ENCODE measurements at regions of chr3 and their contacts with region 1.

Region 1: DNA sequence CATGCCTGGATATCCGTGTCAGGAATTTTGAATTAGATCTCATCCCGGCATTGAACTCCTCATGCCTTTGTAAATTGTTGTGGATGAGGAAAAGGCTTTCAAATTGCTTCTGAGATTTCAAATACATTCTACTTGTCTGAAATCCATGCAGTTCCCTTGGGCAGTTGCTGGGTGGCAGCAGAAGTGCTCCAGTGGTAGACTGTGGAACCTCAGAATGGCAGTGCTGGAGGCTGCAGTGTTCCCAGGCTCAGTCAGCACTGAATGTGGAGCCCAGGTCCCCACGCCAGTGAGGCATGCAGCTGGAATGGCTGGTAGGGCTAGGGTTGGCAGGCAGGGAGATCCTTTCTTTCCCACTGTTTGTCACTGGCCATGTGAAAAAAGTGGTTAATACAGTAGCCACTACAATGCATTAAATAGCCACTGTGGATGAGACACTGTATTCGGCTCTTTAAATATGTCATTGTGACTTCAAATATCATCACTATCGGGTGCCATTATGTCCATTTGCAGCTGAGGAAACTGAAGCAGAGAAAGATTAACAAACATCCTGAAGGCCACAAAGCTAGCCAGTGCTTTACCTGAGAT is 98.6 kb downstream of the TPRG1 start:
- DNase-seq: peak; percentile 61
- H3K4me3 ChIP-seq: no peak overlapping the region
- H3K27ac ChIP-seq: no peak overlapping the region
- H3K4me1 ChIP-seq: no peaks in the 10 kb centered on the region
- CTCF ChIP-seq: peak; percentile 75

Region 2: GRCh38 chr3:189056646-189057335 is 213.5 kb before region 1 on chr3:
- CTCF ChIA-PET with region 1: no interaction called
- POLR2A ChIA-PET with region 1: no interaction called
- intact Hi-C with region 1: no loop called
- DNase-seq: no peak
- H3K4me3 ChIP-seq: no peak overlapping the region
- H3K27ac ChIP-seq: no peak overlapping the region
- H3K4me1 ChIP-seq: no peaks in the 10 kb centered on the region
- CTCF ChIP-seq: no peak

Region 3: GRCh38 chr3:189389346-189389745 is 119.0 kb after region 1 on chr3:
- CTCF ChIA-PET with region 1: no interaction called
- POLR2A ChIA-PET with region 1: no interaction called
- intact Hi-C with region 1: loop called (anchors 5 kb)
- DNase-seq: no peak
- H3K4me3 ChIP-seq: no peak overlapping the region
- H3K27ac ChIP-seq: no peak overlapping the region
- H3K4me1 ChIP-seq: peaks cover 8% of the 10 kb centered on the region
- CTCF ChIP-seq: no peak

Region 4: GRCh38 chr3:189588070-189588820 is 317.9 kb after region 1 on chr3:
- CTCF ChIA-PET with region 1: no interaction called
- POLR2A ChIA-PET with region 1: no interaction called
- intact Hi-C with region 1: loop called (anchors 10 kb)
- DNase-seq: no peak
- H3K4me3 ChIP-seq: no peak overlapping the region
- H3K27ac ChIP-seq: no peak overlapping the region
- H3K4me1 ChIP-seq: no peaks in the 10 kb centered on the region
- CTCF ChIP-seq: no peak

Region 5: DNA sequence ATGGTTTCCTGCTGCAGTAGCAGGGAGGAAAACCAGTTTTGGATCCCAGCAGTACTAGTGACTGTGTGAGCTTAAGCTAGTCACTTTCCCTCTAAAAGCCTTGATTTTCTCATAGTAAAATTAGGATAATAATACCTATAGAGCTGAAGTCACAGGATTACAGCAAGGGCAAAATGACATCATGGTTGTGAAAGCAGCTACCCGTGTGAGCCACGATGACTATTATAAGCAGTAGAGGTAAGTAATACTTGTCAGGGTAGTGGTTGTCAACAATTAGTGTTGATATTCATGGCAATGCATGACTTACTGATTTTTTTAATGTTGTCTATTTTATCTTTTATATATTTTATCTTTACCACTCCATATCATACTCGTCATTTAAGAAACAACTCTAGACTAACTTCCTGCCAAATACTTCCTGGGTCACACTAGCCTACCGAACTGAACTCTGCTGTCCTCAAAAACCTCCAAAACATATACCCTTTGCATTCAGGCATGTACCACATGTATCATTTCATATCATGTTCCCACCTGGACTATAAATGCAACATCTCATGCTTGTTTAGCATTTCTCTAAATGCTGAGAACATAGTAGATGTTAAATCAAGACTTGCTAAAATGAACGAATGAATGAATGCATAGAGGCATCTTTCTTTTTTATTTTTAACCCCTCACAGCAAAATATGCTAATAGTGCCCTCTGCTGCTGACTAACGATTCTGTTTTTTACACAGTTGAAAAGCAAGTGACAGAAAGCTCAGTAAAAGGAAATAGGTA is 677.8 kb after region 1 on chr3:
- CTCF ChIA-PET with region 1: no interaction called
- POLR2A ChIA-PET with region 1: no interaction called
- intact Hi-C with region 1: loop called (anchors 1 kb)
- DNase-seq: peak; percentile 31
- H3K4me3 ChIP-seq: no peak overlapping the region
- H3K27ac ChIP-seq: no peak overlapping the region
- H3K4me1 ChIP-seq: no peaks in the 10 kb centered on the region
- CTCF ChIP-seq: peak; percentile 79

Measured in OCI-LY7 (cell line).